A673 (cell line): ENCODE measurements at regions of chr6 and their contacts with region 1.

Region 1: GRCh38 chr6:57021086-57021720 is 25.3 kb upstream of the KIAA1586 start:
- DNase-seq: peak; percentile 73
- H3K4me3 ChIP-seq: no peak overlapping the region
- H3K27ac ChIP-seq: no peak overlapping the region
- H3K4me1 ChIP-seq: no peaks in the 10 kb centered on the region
- H3K27me3 ChIP-seq: no peaks in the 10 kb centered on the region
- CTCF ChIP-seq: peak; percentile 65

Region 2: GRCh38 chr6:56062836-56063235 is 958.4 kb before region 1 on chr6:
- CTCF ChIA-PET with region 1: no interaction called
- POLR2A ChIA-PET with region 1: interaction called, 12 read pairs
- intact Hi-C with region 1: no loop called
- DNase-seq: no peak
- H3K4me3 ChIP-seq: no peak overlapping the region
- H3K27ac ChIP-seq: no peak overlapping the region
- H3K4me1 ChIP-seq: no peaks in the 10 kb centered on the region
- H3K27me3 ChIP-seq: no peaks in the 10 kb centered on the region
- CTCF ChIP-seq: no peak

Region 3: GRCh38 chr6:56708810-56709597 is 312.2 kb before region 1 on chr6:
- CTCF ChIA-PET with region 1: no interaction called
- POLR2A ChIA-PET with region 1: no interaction called
- intact Hi-C with region 1: loop called (anchors 10 kb)
- DNase-seq: peak; percentile 80
- H3K4me3 ChIP-seq: no peak overlapping the region
- H3K27ac ChIP-seq: no peak overlapping the region
- H3K4me1 ChIP-seq: peaks cover 13% of the 10 kb centered on the region
- H3K27me3 ChIP-seq: no peaks in the 10 kb centered on the region
- CTCF ChIP-seq: peak; percentile 84

Region 4: DNA sequence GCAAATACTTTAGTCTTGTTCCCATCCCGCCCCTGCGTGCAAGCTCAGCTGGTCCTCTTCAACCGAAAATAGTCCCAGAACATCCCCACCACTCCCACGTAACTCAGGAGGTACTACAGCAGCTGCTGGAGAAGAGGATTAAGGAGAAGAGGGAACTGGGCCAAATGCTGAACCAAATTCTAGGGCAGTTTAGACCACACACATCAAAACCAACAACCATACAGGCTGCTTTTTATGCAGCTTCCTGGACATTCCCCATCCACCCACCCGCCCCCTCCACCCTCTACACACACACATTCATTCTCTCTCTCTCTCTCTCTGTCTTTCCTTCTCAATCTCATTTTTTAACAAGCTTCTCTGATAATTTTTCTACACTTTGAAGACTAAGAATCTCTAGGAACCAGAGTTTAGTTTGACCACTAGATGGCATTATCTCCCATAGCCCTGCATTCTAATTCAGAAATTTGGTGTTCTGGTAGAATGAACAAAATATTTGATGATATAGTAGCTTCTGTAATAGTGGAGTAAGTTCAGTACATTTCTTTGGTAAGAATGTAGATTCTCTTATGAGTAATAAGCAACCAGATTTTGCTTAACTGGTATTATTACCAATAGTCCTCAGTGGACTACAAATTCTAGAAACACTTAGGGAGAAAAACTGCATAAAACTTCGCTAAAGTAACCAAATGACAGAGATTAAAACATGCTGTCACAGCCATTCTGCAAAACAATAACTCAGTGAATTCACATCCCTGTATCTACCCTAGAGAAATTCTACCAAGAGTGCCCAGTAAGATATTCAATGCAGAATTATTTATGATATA is 118.3 kb before region 1 on chr6:
- CTCF ChIA-PET with region 1: interaction called, 5 read pairs
- POLR2A ChIA-PET with region 1: no interaction called
- intact Hi-C with region 1: loop called (anchors 2 kb)
- DNase-seq: peak; percentile 65
- H3K4me3 ChIP-seq: no peak overlapping the region
- H3K27ac ChIP-seq: no peak overlapping the region
- H3K4me1 ChIP-seq: no peaks in the 10 kb centered on the region
- H3K27me3 ChIP-seq: no peaks in the 10 kb centered on the region
- CTCF ChIP-seq: peak; percentile 86

Region 5: GRCh38 chr6:57242505-57242904 is 221.3 kb after region 1 on chr6:
- CTCF ChIA-PET with region 1: no interaction called
- POLR2A ChIA-PET with region 1: no interaction called
- intact Hi-C with region 1: no loop called
- DNase-seq: peak; percentile 18
- H3K4me3 ChIP-seq: no peak overlapping the region
- H3K27ac ChIP-seq: no peak overlapping the region
- H3K4me1 ChIP-seq: no peaks in the 10 kb centered on the region
- H3K27me3 ChIP-seq: no peaks in the 10 kb centered on the region
- CTCF ChIP-seq: no peak